ENCODE measurements at regions of chr1 and their contacts with region 1.

Region 1: DNA sequence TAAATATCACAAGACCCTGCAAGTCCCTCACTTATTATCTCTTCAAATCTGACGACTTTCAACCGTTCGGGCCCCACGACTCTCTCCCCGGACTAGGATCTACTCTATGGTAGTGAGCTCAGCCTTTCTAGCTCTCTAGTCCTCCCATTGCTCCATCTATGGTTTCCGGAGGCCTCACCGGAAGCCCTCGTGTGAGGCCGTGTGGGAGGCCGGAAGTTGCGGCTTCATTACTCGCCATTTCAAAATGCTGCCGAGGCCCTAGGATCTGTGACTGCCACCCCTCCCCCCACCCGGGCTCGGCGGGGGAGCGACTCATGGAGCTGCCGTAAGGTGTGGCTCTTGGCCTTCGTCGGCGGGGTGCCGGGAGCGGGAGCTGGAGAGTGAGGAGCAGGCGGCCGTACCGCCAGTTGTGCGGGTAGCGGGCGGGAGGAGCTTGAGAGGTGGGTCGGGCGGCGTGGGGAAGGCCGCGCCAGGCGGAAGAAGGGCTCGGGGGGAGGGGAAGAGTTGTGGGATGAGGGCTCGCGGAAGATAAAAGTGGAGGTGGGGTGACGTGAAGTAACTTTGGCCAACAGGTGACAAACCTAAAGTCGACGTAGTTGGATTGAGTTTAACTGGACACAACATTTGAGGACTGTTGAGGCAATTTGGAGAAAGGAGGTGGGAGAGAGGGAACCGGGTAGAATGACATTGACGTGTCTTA is at the start of gene MDM4:
- DNase-seq: peak; percentile 86 to 94 (median 93)
- ATAC-seq: peak; percentile 87
- H3K4me3 ChIP-seq: peak within 1 kb of the TSS; percentile 91
- H3K4me3 Mint-ChIP-seq: peak within 1 kb of the TSS in 1 of 10 donors; percentile 87
- H3K27ac ChIP-seq: peak within 1 kb of the TSS; percentile 95
- H3K27ac Mint-ChIP-seq: peak within 1 kb of the TSS in 6 of 9 donors; percentile 68 to 98 (median 80)
- H3K4me1 ChIP-seq: peaks cover 64 to 67% of the 10 kb centered on the region in 2 donors
- H3K4me1 Mint-ChIP-seq: peaks cover 32 to 78% (median 66%) of the 10 kb centered on the region in 7 donors
- H3K27me3 ChIP-seq: no peaks in the 10 kb centered on the region
- H3K27me3 Mint-ChIP-seq: no peaks in the 10 kb centered on the region
- total RNA-seq, gene MDM4: 107 to 278 (median 268) TPM

Region 2: DNA sequence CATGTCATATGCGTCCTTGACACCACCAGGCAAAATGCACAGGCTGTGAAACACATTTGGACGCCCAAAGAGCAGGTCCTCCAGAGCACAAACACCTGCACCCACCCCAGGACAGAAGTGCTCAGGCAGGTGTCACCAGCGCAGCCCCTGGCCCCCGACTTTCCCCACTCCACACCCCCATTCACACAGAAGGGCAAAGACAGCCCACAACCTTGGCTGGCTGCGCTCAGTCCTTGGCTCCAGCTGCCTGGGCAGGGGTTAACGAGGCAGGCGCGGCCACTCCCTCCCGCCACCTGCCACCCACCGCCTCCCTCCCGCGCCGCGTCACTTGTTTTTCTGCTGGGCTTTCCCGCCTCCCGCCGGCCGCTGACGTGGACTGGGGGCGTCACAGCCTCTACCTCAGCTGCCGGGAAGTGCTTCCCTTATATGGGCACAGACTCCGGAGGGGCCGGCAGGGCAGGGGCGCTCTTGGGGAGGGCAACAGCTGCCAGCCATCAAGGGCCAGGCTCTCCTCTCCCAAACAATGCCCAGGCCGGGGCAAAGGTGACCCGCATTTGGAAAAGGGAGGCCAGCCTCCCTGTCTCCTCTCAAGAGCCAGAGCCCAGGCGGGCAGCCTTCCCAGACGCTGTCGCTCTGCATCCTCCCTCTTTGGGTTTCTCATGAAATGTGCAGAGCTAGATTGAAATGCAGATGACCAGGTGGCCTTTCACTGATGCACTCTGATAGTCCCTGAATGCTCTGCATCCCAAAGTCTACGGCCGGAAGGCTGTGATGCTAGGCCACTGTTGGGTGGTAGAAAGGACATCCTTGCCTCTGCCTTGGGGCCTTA is 1225.9 kb before region 1 on chr1:
- CTCF ChIA-PET with region 1: no interaction called
- POLR2A ChIA-PET with region 1: interaction called, 4 read pairs
- intact Hi-C with region 1: loop called in 1 of 2 experiments (anchors 10 kb)
- DNase-seq: peak; percentile 95 to 98 (median 97)
- ATAC-seq: peak; percentile 76
- H3K4me3 ChIP-seq: peak overlapping the region; percentile 57
- H3K4me3 Mint-ChIP-seq: peak overlapping the region; percentile 75 to 89 (median 86)
- H3K27ac ChIP-seq: peak overlapping the region; percentile 98
- H3K27ac Mint-ChIP-seq: peak overlapping the region; percentile 97 to 100 (median 99)
- H3K4me1 ChIP-seq: peaks cover 54 to 58% of the 10 kb centered on the region in 2 donors
- H3K4me1 Mint-ChIP-seq: peaks cover 44 to 92% (median 86%) of the 10 kb centered on the region in 7 donors
- H3K27me3 ChIP-seq: no peaks in the 10 kb centered on the region
- H3K27me3 Mint-ChIP-seq: peaks cover 0 to 3% (median 0%) of the 10 kb centered on the region in 5 donors

Region 3: DNA sequence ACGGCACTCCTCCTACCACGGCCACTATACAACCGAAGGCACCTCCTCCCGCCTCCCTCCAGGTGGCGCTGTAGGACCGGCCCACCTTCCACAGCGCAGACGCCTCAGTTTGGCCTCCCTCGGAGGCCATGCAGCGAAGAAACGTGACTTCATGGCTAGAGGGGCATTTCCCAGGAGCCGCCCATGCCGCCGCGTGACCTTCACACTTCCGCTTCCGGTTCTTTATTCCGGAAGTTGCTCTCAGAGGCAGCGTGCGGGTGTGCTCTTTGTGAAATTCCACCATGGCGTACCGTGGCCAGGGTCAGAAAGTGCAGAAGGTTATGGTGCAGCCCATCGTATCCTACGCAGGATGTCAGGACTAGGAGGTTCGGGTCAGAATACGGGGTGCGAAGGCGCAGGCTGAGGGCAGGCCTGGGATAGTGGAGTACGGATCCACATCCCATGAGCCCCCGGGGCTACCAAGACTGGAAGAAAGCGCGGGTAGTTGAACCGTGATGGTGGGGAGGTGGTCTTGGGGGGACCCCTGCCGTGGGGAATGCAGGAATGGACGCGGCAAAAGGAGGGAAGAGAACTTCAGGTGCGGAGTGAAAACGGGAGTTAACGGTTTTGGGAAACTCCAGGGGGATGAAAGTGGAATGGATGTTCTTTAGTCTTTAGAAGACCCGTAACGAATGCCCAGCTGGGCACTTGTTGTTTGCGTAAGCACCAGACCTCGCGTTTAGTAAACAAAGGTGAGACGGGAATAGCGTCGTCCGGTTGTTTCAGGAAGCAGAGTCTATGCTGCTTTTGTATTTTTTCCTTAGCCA is 654.7 kb before region 1 on chr1 and contains the start of gene SNRPE:
- CTCF ChIA-PET with region 1: no interaction called
- POLR2A ChIA-PET with region 1: no interaction called
- intact Hi-C with region 1: loop called (anchors 5 to 10 kb)
- DNase-seq: peak; percentile 93 to 98 (median 97)
- ATAC-seq: peak; percentile 100
- H3K4me3 ChIP-seq: peak within 1 kb of the TSS; percentile 82
- H3K4me3 Mint-ChIP-seq: peak within 1 kb of the TSS; percentile 97 to 100 (median 99)
- H3K27ac ChIP-seq: peak within 1 kb of the TSS; percentile 89
- H3K27ac Mint-ChIP-seq: peak within 1 kb of the TSS; percentile 95 to 100 (median 98)
- H3K4me1 ChIP-seq: peaks cover 10 to 13% of the 10 kb centered on the region in 2 donors
- H3K4me1 Mint-ChIP-seq: peaks cover 11 to 34% (median 23%) of the 10 kb centered on the region in 7 donors
- H3K27me3 ChIP-seq: no peaks in the 10 kb centered on the region
- H3K27me3 Mint-ChIP-seq: no peaks in the 10 kb centered on the region
- total RNA-seq, gene SNRPE: 54.4 to 156 (median 81.7) TPM

Region 4: DNA sequence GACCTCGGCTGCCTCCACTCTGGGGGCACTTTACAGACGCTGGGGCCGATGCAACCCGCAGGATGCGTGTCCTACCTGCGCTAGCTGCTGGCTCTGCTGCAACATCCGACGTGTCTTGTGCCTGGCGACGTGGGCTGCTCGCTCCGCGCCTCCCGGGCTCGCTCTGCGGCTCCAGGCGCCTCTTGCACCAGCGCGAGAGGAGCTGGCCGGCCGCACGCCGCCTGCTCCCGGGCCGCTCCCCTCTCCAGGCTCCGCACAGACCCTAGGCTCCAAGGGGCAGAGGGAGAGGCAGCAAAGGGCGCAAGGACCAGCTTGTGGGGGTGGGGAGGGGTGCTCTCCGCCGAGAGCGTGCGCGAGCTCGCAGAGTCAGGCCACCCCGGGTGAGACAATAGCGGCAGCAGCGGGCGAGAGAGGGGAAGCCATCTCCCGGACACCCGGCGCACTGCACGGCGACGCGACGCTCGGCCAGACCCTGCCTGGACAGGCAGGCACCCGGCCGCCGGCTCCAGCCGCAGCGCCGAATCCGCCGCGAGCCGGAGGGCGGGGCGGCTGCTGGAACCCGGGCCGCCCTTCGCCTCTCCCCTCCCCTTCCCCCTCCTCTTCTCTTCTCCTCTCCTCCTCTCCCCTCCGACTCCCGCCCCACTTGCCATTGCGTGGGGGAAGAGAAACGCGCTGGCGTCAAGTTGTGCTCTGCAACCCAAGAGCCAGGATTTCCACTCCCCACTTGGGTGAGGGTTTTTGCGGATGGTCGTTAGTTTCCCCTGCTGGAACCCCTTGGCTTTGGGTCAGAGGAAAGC is 21.9 kb before region 1 on chr1 and contains the start of gene PIK3C2B:
- CTCF ChIA-PET with region 1: interaction called, 5 read pairs
- POLR2A ChIA-PET with region 1: interaction called, 31 read pairs
- intact Hi-C with region 1: loop called (anchors 1 to 2 kb)
- DNase-seq: peak; percentile 54 to 80 (median 72)
- ATAC-seq: peak; percentile 83
- H3K4me3 ChIP-seq: peak within 1 kb of the TSS; percentile 84
- H3K4me3 Mint-ChIP-seq: peak within 1 kb of the TSS; percentile 92 to 98 (median 95)
- H3K27ac ChIP-seq: peak within 1 kb of the TSS; percentile 87
- H3K27ac Mint-ChIP-seq: peak within 1 kb of the TSS; percentile 83 to 98 (median 93)
- H3K4me1 ChIP-seq: peaks cover 23 to 35% of the 10 kb centered on the region in 2 donors
- H3K4me1 Mint-ChIP-seq: peaks cover 37 to 89% (median 73%) of the 10 kb centered on the region in 7 donors
- H3K27me3 ChIP-seq: no peaks in the 10 kb centered on the region
- H3K27me3 Mint-ChIP-seq: peaks cover 0 to 2% (median 0%) of the 10 kb centered on the region in 5 donors
- total RNA-seq, gene PIK3C2B: 26.8 to 41.9 (median 32.5) TPM

Region 5: DNA sequence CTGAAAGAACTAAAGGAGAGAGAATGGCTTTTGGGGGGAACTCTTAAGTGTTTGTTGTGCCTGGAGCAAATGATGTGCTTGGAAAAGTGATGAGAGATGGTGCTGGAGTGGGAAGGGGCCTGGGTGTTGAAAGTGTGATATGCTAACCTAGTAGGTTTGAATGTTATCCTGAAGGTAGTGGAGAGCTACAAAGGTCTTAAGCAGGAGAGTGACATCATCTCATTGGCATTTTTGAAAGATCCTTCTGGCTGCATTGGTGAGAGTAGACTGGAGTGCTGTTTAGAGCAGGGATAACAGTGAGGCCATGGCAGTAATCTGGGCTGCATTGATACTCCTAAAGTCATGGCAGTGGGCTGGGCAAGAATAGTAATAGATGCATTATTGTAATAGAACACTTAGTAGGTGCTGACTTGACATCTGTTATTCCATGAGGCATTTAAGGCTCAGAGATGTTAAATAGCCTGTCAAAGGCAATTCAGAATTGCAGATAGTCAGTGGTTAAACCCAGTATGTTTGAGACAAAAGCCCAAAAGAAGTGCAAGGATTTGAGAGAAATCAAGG is 44.3 kb after region 1 on chr1:
- CTCF ChIA-PET with region 1: interaction called, 6 read pairs
- POLR2A ChIA-PET with region 1: interaction called, 28 read pairs
- intact Hi-C with region 1: loop called (anchors 1 to 2 kb)
- DNase-seq: no peak
- ATAC-seq: no peak
- H3K4me3 ChIP-seq: no peak overlapping the region
- H3K4me3 Mint-ChIP-seq: peak overlapping the region in 1 of 10 donors; percentile 6
- H3K27ac ChIP-seq: no peak overlapping the region
- H3K27ac Mint-ChIP-seq: peak overlapping the region in 7 of 9 donors; percentile 30 to 82 (median 62)
- H3K4me1 ChIP-seq: peaks cover 12 to 52% of the 10 kb centered on the region in 2 donors
- H3K4me1 Mint-ChIP-seq: peaks cover 30 to 87% (median 71%) of the 10 kb centered on the region in 7 donors
- H3K27me3 ChIP-seq: no peaks in the 10 kb centered on the region
- H3K27me3 Mint-ChIP-seq: no peaks in the 10 kb centered on the region

Region 6: DNA sequence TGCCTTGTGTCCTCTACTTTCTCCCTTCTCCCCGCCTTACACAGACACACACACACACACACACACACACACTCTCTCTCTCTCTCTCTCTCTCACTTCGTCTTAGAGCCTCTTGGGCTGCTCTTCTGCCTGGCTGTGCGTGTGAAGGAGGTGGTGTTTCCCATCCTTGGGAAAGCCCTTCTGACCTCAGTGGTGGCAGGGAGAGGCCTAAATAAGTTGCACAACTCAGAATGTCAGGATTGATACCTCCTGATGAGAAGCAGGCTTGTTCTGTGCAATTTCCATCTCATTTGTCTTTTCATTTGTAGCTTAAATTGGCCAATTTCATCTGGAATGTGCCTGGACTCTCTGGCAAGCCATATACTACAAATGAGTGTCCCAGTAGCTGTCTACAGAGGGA is 144.2 kb after region 1 on chr1:
- CTCF ChIA-PET with region 1: no interaction called
- POLR2A ChIA-PET with region 1: no interaction called
- intact Hi-C with region 1: no loop called
- DNase-seq: no peak
- ATAC-seq: no peak
- H3K4me3 ChIP-seq: no peak overlapping the region
- H3K4me3 Mint-ChIP-seq: no peak overlapping the region
- H3K27ac ChIP-seq: no peak overlapping the region
- H3K27ac Mint-ChIP-seq: no peak overlapping the region
- H3K4me1 ChIP-seq: no peaks in the 10 kb centered on the region
- H3K4me1 Mint-ChIP-seq: peaks cover 0 to 3% (median 0%) of the 10 kb centered on the region in 7 donors
- H3K27me3 ChIP-seq: no peaks in the 10 kb centered on the region
- H3K27me3 Mint-ChIP-seq: peaks cover 0 to 20% (median 14%) of the 10 kb centered on the region in 5 donors

Region 7: GRCh38 chr1:205121660-205122488 is 605.5 kb after region 1 on chr1 and contains the start of gene RBBP5:
- CTCF ChIA-PET with region 1: no interaction called
- POLR2A ChIA-PET with region 1: no interaction called
- intact Hi-C with region 1: loop called in 1 of 2 experiments (anchors 5 kb)
- DNase-seq: peak; percentile 87 to 97 (median 93)
- ATAC-seq: peak; percentile 98
- H3K4me3 ChIP-seq: peak within 1 kb of the TSS; percentile 89
- H3K4me3 Mint-ChIP-seq: peak within 1 kb of the TSS; percentile 89 to 99 (median 96)
- H3K27ac ChIP-seq: peak within 1 kb of the TSS; percentile 86
- H3K27ac Mint-ChIP-seq: peak within 1 kb of the TSS; percentile 98 to 100 (median 99)
- H3K4me1 ChIP-seq: peaks cover 18 to 24% of the 10 kb centered on the region in 2 donors
- H3K4me1 Mint-ChIP-seq: peaks cover 30 to 56% (median 51%) of the 10 kb centered on the region in 7 donors
- H3K27me3 ChIP-seq: no peaks in the 10 kb centered on the region
- H3K27me3 Mint-ChIP-seq: no peaks in the 10 kb centered on the region
- total RNA-seq, gene RBBP5: 11.0 to 31.5 (median 21.0) TPM

Measured in naive thymus-derived CD4-positive, alpha-beta T cell (primary cell).